OCI-LY7 (cell line): ENCODE measurements at regions of chr14 and their contacts with region 1.

Region 1: DNA sequence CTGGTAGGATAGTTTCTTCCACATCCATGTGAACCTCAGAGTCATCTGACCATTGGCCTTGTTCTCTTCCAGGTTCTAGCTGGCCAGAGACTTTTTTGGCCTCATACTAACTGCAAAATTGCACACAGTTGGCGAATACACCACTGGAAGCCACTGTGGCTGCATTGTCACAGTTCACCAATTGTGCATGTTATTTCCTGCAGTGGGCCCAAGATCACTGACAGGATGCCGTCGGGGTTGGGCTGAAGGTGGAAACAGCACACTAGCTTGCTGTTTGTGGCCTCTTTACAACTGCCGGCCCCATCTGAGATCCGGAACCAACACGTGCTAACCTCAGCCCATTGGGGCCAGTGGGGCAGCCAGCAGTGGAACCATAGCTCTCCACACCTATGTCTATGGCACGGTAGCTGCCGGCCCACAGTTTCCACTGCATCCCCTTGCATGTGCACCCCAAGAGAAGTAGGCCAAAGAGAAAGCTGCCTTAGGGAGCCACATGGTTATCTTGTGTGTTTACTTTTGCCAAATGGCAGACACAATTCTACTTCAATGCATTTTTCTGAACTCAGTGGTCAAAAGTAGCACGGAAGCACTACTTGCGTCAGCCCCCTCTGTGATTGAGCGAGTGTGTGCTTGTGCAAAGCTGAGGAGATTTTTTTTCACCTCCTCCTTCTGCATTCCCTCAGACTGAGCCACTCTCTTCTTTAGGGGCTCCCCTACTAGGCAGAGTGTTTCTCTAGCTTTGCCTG is 464.0 kb downstream of the RAD51B start:
- DNase-seq: peak; percentile 96
- H3K4me3 ChIP-seq: peak overlapping the region; percentile 54
- H3K27ac ChIP-seq: peak overlapping the region; percentile 92
- H3K4me1 ChIP-seq: peaks cover 98% of the 10 kb centered on the region
- CTCF ChIP-seq: 0 out of 2 replicates have a peak, but pooled peaks have one; percentile 29

Region 2: GRCh38 chr14:67571272-67571850 is 712.2 kb before region 1 on chr14:
- CTCF ChIA-PET with region 1: no interaction called
- POLR2A ChIA-PET with region 1: no interaction called
- intact Hi-C with region 1: no loop called
- DNase-seq: peak; percentile 67
- H3K4me3 ChIP-seq: no peak overlapping the region
- H3K27ac ChIP-seq: no peak overlapping the region
- H3K4me1 ChIP-seq: no peaks in the 10 kb centered on the region
- CTCF ChIP-seq: peak; percentile 96

Region 3: DNA sequence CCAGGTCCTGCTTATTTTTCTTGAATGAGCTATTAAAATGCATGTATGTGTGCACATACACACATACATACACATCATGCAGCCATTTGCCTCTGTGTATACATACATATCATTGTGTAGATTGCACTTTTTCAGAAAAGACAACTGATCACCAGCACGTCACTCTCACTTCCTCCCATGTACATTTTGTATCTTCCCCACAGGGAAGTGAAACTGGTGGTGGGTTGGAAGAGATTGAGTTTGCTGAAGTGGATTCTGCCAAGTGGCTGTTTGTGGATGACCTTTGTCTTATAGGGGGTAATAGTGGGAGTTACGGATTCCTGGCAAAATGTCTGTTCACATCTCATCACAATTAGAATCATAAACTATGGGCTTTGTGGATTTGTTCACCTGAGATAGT is 15.4 kb before region 1 on chr14:
- CTCF ChIA-PET with region 1: interaction called, 8 read pairs
- POLR2A ChIA-PET with region 1: interaction called, 15 read pairs
- intact Hi-C with region 1: loop called (anchors 1 kb)
- DNase-seq: peak; percentile 93
- H3K4me3 ChIP-seq: peak overlapping the region; percentile 42
- H3K27ac ChIP-seq: peak overlapping the region; percentile 93
- H3K4me1 ChIP-seq: peaks cover 91% of the 10 kb centered on the region
- CTCF ChIP-seq: no peak

Region 4: GRCh38 chr14:68341411-68342212 is 58.1 kb after region 1 on chr14:
- CTCF ChIA-PET with region 1: no interaction called
- POLR2A ChIA-PET with region 1: interaction called, 4 read pairs
- intact Hi-C with region 1: loop called (anchors 5 kb)
- DNase-seq: peak; percentile 51
- H3K4me3 ChIP-seq: peak overlapping the region; percentile 7
- H3K27ac ChIP-seq: peak overlapping the region; percentile 25
- H3K4me1 ChIP-seq: peaks cover 49% of the 10 kb centered on the region
- CTCF ChIP-seq: no peak

Region 5: GRCh38 chr14:68506021-68506644 is 222.6 kb after region 1 on chr14:
- CTCF ChIA-PET with region 1: no interaction called
- POLR2A ChIA-PET with region 1: interaction called, 3 read pairs
- intact Hi-C with region 1: loop called (anchors 5 kb)
- DNase-seq: peak; percentile 32
- H3K4me3 ChIP-seq: peak overlapping the region; percentile 17
- H3K27ac ChIP-seq: peak overlapping the region; percentile 86
- H3K4me1 ChIP-seq: peaks cover 55% of the 10 kb centered on the region
- CTCF ChIP-seq: no peak

Region 6: DNA sequence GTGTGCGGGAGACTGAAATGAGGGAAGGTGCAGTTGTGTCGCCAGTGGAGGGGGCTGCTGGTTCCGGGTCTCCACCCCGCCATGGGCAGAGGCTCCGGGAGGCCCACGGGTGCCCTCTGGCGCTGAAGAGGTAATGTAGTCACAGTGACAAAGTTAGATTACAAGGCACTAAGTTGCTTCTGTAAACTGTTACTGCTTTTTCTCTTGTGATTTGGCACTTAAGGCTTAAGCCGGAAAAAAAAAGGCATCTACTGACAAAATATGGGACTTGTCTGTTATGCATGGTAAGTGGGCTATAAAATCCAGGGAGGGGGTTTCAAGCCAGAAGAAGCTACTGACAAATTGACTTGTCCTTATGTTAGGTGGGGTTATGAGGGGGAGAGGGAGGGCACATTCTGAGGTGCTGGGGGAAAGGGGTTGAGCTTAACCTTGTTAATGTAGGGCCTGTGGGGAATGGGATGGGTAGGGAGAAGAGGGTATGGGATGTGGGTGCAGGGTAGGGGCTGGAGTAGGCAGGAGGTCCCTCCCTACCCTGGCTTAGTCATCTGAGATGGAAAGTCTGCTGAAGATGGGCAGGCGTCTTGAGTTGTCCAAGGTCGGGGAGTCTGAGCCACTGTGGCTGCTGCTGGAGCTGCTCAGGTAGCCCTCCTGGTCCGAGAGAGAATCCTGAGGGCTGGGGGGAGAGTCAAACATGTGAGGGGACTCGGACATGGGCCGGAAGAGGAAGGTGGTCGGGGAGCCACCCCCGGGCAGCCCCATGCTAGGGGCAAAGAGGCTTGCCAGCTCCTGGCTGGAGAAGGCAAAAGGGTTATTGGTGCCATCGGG is 505.7 kb after region 1 on chr14:
- CTCF ChIA-PET with region 1: no interaction called
- POLR2A ChIA-PET with region 1: interaction called, 11 read pairs
- intact Hi-C with region 1: loop called (anchors 1 kb)
- DNase-seq: peak; percentile 89
- H3K4me3 ChIP-seq: peak overlapping the region; percentile 87
- H3K27ac ChIP-seq: peak overlapping the region; percentile 92
- H3K4me1 ChIP-seq: peaks cover 56% of the 10 kb centered on the region
- CTCF ChIP-seq: peak; percentile 90